ENCODE measurements at regions of chr7 and their contacts with region 1.

Region 1: GRCh38 chr7:145134377-145134776 is 298.5 kb upstream of the TPK1 start:
- DNase-seq: no peak
- ATAC-seq: no peak
- H3K4me3 Mint-ChIP-seq: no peak overlapping the region
- H3K27ac Mint-ChIP-seq: no peak overlapping the region
- H3K4me1 Mint-ChIP-seq: no peaks in the 10 kb centered on the region
- H3K27me3 Mint-ChIP-seq: no peaks in the 10 kb centered on the region

Region 2: GRCh38 chr7:145092766-145093165 is 41.6 kb before region 1 on chr7:
- POLR2A ChIA-PET with region 1: no interaction called
- DNase-seq: no peak
- ATAC-seq: no peak
- H3K4me3 Mint-ChIP-seq: no peak overlapping the region
- H3K27ac Mint-ChIP-seq: no peak overlapping the region
- H3K4me1 Mint-ChIP-seq: no peaks in the 10 kb centered on the region
- H3K27me3 Mint-ChIP-seq: peaks cover 2% of the 10 kb centered on the region

Region 3: GRCh38 chr7:145193951-145194350 is 59.6 kb after region 1 on chr7:
- POLR2A ChIA-PET with region 1: interaction called, 11 read pairs
- DNase-seq: no peak
- ATAC-seq: no peak
- H3K4me3 Mint-ChIP-seq: no peak overlapping the region
- H3K27ac Mint-ChIP-seq: no peak overlapping the region
- H3K4me1 Mint-ChIP-seq: no peaks in the 10 kb centered on the region
- H3K27me3 Mint-ChIP-seq: no peaks in the 10 kb centered on the region

Measured in activated naive CD8-positive, alpha-beta T cell treated with anti-CD3 and anti-CD28 coated beads, Interleukin-2, amount 10 ng/mL, durations not matched to agents 7 days and 5 days (primary cell).